Mammary epithelial cell (primary cell): ENCODE measurements at regions of chr6 and their contacts with region 1.

Region 1: DNA sequence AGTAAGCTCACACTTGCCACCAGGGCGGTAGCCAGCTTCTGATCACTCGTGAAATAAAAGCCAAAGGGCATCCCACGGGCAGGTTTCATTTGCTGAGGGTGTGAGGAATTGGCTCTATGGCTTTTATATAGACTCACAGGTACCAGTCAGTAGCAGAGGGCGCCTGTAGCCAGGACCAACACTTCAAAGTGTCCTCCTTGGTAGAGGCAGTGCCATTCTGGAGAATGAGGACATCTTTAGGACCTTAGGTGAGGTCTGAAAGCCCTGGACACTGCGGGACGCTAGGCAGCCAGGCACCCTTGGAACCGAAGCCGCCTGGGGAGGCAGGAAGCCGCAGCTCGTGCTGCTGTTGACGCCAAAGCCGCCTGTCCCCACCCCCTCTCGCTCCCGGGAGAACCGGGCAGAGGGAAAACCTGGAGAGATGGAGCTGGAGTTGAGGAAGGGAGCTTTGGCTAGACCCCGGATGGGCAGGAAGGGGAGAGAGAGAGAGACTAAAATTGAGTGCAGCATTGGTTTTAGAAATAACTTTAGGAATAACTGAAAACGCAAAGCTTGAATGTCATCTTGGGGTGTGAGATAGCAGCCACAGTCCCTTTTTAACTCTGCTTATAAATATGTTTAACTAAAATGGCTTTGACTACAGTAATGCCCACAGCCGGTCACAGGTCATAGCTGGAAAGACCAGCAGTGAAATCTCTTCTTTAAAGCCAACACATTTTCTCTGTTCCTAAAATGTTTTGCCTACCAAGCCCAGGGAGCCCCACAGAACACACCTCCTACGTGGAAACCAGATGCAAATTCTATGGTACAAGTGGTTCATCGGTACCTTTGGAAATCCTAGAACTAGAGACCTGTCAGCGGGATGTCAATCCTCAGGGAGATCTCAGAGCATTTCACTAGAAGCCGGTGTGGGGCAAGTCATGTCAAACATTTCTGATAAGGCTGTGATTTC is 128.5 kb upstream of the CDYL start:
- DNase-seq: peak; percentile 63
- H3K4me3 ChIP-seq: peak overlapping the region in 2 of 3 experiments; percentile 27 to 35
- H3K27ac ChIP-seq: peak overlapping the region; percentile 20
- H3K4me1 ChIP-seq: peaks cover 16% of the 10 kb centered on the region
- H3K27me3 ChIP-seq: no peaks in the 10 kb centered on the region
- CTCF ChIP-seq: no peak

Region 2: DNA sequence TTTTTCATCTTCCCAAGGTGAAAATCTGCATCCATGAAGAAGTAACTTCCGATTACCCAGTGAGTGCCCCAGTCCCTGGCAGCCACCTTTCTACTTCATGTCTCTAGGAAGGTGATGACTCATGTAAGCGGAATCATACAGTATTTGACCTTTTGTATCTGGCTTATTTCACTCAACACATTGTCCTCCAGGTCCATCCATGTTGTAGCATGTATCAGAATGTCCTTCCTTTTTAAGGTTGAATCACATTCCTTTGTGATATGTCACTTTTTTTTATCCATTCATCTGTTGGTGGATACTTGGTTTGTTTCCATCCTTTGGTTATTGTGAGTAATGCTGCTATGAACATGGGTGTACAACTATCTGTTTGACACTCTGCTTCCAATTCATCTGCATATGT is 47.8 kb before region 1 on chr6:
- CTCF ChIA-PET with region 1: no interaction called
- dilution Hi-C with region 1: no loop called
- in situ Hi-C with region 1: no loop called
- intact Hi-C with region 1: loop called (anchors 1 kb)
- DNase-seq: peak; percentile 97
- H3K4me3 ChIP-seq: no peak overlapping the region
- H3K27ac ChIP-seq: peak overlapping the region; percentile 94
- H3K4me1 ChIP-seq: peaks cover 38% of the 10 kb centered on the region
- H3K27me3 ChIP-seq: no peaks in the 10 kb centered on the region
- CTCF ChIP-seq: no peak

Region 3: DNA sequence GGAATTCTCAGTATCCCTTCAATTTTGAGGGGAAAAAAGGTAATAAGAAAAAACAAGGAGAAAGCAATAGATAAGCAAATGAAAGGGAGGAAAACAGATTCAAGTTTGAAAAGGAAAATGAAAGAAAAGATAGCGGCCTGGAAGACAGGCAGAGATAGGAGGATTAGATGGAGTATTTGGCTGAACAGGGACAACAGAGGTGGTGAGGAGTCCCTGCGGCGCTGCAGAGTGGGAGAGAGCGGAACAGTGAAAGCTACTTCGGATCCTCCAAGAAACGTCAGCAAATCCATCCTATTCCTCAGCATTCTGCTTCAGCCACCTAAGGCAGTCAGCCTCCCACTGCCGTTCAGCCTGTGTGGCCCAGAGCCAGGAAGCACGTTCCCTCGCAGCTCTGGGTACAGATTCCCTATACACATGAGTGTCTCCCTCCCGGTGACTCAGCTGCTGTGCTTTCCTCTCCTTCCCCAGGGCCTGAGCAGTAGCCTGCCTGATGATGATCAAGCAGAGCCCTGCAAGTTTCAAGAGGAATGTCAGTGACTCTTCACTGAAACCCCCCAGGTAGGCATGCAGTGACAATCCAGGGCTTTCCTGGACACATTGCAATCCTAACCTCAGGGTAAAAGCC is 85.1 kb after region 1 on chr6:
- CTCF ChIA-PET with region 1: no interaction called
- dilution Hi-C with region 1: no loop called
- in situ Hi-C with region 1: no loop called
- intact Hi-C with region 1: loop called (anchors 5 kb)
- DNase-seq: peak; percentile 95
- H3K4me3 ChIP-seq: peak overlapping the region; percentile 21 to 47 (median 32)
- H3K27ac ChIP-seq: peak overlapping the region; percentile 79
- H3K4me1 ChIP-seq: peaks cover 23% of the 10 kb centered on the region
- H3K27me3 ChIP-seq: no peaks in the 10 kb centered on the region
- CTCF ChIP-seq: no peak

Region 4: GRCh38 chr6:4805553-4806336 is 158.1 kb after region 1 on chr6:
- CTCF ChIA-PET with region 1: no interaction called
- dilution Hi-C with region 1: no loop called
- in situ Hi-C with region 1: no loop called
- intact Hi-C with region 1: loop called (anchors 10 kb)
- DNase-seq: peak; percentile 40
- H3K4me3 ChIP-seq: no peak overlapping the region
- H3K27ac ChIP-seq: peak overlapping the region; percentile 50
- H3K4me1 ChIP-seq: peaks cover 43% of the 10 kb centered on the region
- H3K27me3 ChIP-seq: no peaks in the 10 kb centered on the region
- CTCF ChIP-seq: peak; percentile 76 to 88

Region 5: DNA sequence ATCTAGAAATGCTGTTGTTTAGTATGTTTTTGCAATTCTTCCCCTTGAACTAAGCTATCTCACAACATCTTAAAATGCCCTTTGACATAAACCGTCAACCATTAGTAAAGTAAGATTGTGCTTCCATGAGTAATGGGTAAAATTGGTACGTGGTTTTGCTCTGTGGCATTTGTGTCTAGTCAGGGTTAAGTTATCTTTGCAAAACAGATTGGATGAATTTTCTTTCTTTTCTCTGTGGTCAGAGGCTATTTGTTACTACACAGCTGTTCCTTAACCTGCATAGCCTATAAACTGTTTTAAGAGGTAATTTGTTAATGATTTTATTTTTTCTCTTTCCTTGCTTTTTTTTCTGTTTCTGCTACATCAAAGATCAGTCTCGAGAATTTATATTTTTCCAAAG is 280.7 kb after region 1 on chr6:
- CTCF ChIA-PET with region 1: no interaction called
- dilution Hi-C with region 1: no loop called
- in situ Hi-C with region 1: no loop called
- intact Hi-C with region 1: loop called (anchors 5 kb)
- DNase-seq: peak; percentile 37
- H3K4me3 ChIP-seq: no peak overlapping the region
- H3K27ac ChIP-seq: no peak overlapping the region
- H3K4me1 ChIP-seq: peaks cover 10% of the 10 kb centered on the region
- H3K27me3 ChIP-seq: no peaks in the 10 kb centered on the region
- CTCF ChIP-seq: no peak